CD4-positive, alpha-beta memory T cell (primary cell): ENCODE measurements at regions of chr12 and their contacts with region 1.

Region 1: GRCh38 chr12:11202811-11203210 is 16.1 kb upstream of the TAS2R42 start:
- DNase-seq: no peak
- H3K4me3 ChIP-seq: no peak overlapping the region
- H3K4me3 Mint-ChIP-seq: no peak overlapping the region
- H3K27ac ChIP-seq: no peak overlapping the region
- H3K27ac Mint-ChIP-seq: no peak overlapping the region
- H3K4me1 ChIP-seq: no peaks in the 10 kb centered on the region
- H3K4me1 Mint-ChIP-seq: no peaks in the 10 kb centered on the region
- H3K27me3 ChIP-seq: no peaks in the 10 kb centered on the region
- H3K27me3 Mint-ChIP-seq: no peaks in the 10 kb centered on the region

Region 2: GRCh38 chr12:10771132-10771733 is 431.6 kb before region 1 on chr12:
- CTCF ChIA-PET with region 1: interaction called, 48 read pairs
- POLR2A ChIA-PET with region 1: no interaction called
- intact Hi-C with region 1: no loop called
- DNase-seq: peak in 4 of 5 donors; percentile 45 to 57 (median 50)
- H3K4me3 ChIP-seq: no peak overlapping the region
- H3K4me3 Mint-ChIP-seq: no peak overlapping the region
- H3K27ac ChIP-seq: no peak overlapping the region
- H3K27ac Mint-ChIP-seq: no peak overlapping the region
- H3K4me1 ChIP-seq: no peaks in the 10 kb centered on the region
- H3K4me1 Mint-ChIP-seq: no peaks in the 10 kb centered on the region
- H3K27me3 ChIP-seq: peaks cover 3% of the 10 kb centered on the region
- H3K27me3 Mint-ChIP-seq: peaks cover 24 to 27% of the 10 kb centered on the region in 2 donors

Region 3: GRCh38 chr12:11130999-11131398 is 71.8 kb before region 1 on chr12:
- CTCF ChIA-PET with region 1: no interaction called
- POLR2A ChIA-PET with region 1: no interaction called
- intact Hi-C with region 1: no loop called
- DNase-seq: no peak
- H3K4me3 ChIP-seq: no peak overlapping the region
- H3K4me3 Mint-ChIP-seq: peak overlapping the region in 1 of 8 donors; percentile 13
- H3K27ac ChIP-seq: no peak overlapping the region
- H3K27ac Mint-ChIP-seq: no peak overlapping the region
- H3K4me1 ChIP-seq: no peaks in the 10 kb centered on the region
- H3K4me1 Mint-ChIP-seq: peaks cover 18 to 23% (median 20%) of the 10 kb centered on the region in 4 donors
- H3K27me3 ChIP-seq: no peaks in the 10 kb centered on the region
- H3K27me3 Mint-ChIP-seq: no peaks in the 10 kb centered on the region

Region 4: GRCh38 chr12:11162502-11162901 is 40.3 kb before region 1 on chr12:
- CTCF ChIA-PET with region 1: no interaction called
- POLR2A ChIA-PET with region 1: no interaction called
- intact Hi-C with region 1: no loop called
- DNase-seq: no peak
- H3K4me3 ChIP-seq: no peak overlapping the region
- H3K4me3 Mint-ChIP-seq: peak overlapping the region in 1 of 8 donors; percentile 11
- H3K27ac ChIP-seq: no peak overlapping the region
- H3K27ac Mint-ChIP-seq: no peak overlapping the region
- H3K4me1 ChIP-seq: peaks cover 12% of the 10 kb centered on the region
- H3K4me1 Mint-ChIP-seq: peaks cover 45 to 66% (median 53%) of the 10 kb centered on the region in 4 donors
- H3K27me3 ChIP-seq: no peaks in the 10 kb centered on the region
- H3K27me3 Mint-ChIP-seq: no peaks in the 10 kb centered on the region